Cardiac septum (tissue), 1 donor: ENCODE measurements at regions of chr1 and their contacts with region 1.

Region 1: DNA sequence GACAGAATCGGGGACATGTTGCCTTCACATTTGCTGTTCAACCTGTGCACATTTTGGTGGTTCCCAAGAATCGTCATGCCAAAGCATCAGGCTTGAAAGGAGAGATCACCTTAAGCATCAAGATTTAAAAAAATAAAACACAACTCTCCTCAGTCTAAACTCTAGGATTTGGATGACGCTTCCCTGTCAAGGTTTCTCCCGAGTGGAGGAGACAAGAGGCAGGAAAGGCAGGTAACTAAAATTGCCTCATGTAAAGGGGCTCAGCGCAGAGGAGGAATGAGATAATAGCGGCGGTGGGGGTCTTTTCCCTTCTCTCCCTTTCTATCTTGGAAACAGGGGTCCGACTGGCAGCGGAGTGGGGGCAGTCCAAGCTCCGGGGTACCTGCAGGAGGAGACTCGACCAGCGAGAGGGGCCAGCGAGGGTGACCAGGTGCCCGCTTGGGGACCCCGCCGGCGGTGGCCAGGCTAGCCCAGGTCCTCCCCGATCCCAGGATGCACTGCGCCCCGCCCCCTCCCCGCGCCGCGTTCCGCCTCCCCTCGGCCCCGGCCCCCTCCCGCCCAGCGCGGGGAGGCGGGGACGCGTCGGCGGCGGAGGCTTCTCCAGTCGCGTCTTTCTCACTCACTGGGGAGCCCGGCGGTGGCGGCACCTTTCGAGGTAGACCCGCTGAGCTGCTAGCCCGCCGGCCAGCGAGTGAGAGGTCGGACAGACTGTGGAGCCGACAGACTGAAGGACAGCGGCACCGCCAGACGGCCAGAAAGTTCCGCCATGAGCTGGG is at the start of gene FNBP1L:
- DNase-seq: peak; percentile 80
- total RNA-seq, gene FNBP1L: 13.5 TPM

Region 2: DNA sequence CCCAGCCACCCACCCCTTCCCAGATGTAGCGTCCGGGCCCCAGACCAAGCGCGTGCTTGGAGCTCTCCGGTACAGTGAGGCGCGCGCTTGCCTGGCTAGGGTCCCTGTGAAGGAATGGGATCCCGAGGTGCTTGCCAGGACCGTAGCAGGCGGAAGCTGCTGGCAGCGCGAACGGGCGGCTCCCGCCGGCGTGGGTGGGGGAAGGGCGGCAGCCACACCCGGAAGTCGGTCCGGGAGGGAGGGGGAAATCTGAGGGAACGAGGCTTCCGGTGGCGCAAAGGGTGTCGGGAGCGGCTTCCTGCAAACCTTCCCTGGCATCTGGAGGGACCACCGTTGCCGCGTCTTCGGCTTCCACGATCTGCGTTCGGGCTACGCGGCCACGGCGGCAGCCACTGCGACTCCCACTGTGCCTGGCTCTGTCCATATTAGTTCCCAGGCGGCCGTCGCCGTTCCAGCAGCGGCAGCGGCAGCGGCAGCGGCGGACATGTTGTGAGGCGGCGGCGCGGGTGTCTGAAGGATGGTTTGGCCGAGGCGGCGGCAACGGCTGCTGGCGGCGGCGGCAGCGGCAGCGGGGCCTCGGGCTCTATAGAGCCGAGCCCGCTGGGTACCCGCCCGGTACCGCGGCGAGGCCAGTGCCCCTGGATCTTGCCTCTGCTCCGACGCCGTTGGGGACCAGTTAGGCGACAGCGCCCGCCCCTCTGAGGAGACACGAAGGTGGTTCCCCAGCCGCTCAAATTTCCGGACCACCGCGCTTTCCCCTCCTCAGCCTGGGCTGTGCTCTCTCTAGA is 101.9 kb before region 1 on chr1 and contains the start of gene DR1:
- intact Hi-C with region 1: loop called (anchors 5 kb)
- DNase-seq: peak; percentile 98
- total RNA-seq, gene DR1: 41.2 TPM

Region 3: GRCh38 chr1:93552741-93553455 is 105.2 kb after region 1 on chr1:
- intact Hi-C with region 1: loop called (anchors 5 kb)
- DNase-seq: no peak

Region 4: DNA sequence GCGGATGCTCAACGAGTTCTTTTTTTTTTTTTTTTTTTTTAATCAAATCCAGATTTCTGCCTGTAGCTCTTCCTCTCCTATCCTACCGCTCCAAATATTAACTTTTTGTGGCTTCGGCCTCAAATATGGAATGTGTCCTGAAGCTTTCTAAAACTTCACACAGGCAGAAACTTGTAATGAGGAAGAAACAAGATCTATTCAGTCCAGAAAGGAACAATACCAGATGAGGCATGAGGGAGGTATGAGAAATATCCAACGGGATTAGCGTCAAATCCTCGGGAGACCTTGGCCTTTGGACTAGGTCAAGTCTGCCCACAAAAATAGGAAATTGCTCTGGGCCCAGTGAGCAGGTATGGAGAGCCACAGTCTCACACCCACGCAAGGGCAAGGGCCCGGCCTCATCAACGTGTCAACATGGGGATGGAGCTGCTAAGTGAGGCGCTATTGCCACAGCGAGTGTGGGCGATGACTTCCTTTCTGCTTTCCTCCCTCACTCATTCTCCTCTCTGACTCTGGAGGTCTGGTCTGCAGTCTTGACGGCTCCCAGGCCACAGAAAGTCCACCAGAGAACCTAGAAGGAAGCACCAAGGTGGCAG is 167.4 kb after region 1 on chr1:
- intact Hi-C with region 1: loop called (anchors 5 kb)
- DNase-seq: no peak